ENCODE measurements at regions of chr14 and their contacts with region 1.

Region 1: DNA sequence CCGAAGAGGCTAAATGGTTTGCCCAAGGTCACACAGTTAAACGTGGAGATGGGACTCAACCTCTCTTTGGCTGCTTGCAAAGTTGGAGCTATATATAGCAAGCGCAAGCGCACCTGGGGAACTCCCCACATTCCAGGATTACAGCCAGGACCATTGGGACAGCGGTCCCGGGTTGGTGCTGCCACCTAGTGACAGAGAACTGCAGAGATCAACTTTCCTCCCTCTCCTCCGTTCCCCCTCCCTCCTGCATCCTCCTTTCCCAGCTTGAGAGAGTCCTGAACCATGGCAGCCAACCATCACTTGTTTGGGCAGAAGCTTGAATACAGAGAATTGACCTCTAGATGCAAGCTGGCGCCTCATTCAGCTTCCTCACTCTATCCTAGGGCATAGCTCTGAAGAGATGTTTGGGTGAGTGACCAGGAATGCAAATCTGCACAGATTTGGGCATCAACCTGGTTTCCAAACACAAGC is 17.4 kb upstream of the FLVCR2 start:
- DNase-seq: peak; percentile 71
- ATAC-seq: no peak
- H3K4me3 Mint-ChIP-seq: peak overlapping the region; percentile 13
- H3K27ac Mint-ChIP-seq: peak overlapping the region; percentile 88
- H3K4me1 Mint-ChIP-seq: peaks cover 82% of the 10 kb centered on the region
- H3K27me3 Mint-ChIP-seq: no peaks in the 10 kb centered on the region

Region 2: GRCh38 chr14:75383721-75384120 is 177.3 kb before region 1 on chr14:
- CTCF ChIA-PET with region 1: no interaction called
- POLR2A ChIA-PET with region 1: no interaction called
- intact Hi-C with region 1: no loop called
- DNase-seq: no peak
- ATAC-seq: no peak
- H3K4me3 Mint-ChIP-seq: no peak overlapping the region
- H3K27ac Mint-ChIP-seq: no peak overlapping the region
- H3K4me1 Mint-ChIP-seq: no peaks in the 10 kb centered on the region
- H3K27me3 Mint-ChIP-seq: peaks cover 5% of the 10 kb centered on the region

Region 3: DNA sequence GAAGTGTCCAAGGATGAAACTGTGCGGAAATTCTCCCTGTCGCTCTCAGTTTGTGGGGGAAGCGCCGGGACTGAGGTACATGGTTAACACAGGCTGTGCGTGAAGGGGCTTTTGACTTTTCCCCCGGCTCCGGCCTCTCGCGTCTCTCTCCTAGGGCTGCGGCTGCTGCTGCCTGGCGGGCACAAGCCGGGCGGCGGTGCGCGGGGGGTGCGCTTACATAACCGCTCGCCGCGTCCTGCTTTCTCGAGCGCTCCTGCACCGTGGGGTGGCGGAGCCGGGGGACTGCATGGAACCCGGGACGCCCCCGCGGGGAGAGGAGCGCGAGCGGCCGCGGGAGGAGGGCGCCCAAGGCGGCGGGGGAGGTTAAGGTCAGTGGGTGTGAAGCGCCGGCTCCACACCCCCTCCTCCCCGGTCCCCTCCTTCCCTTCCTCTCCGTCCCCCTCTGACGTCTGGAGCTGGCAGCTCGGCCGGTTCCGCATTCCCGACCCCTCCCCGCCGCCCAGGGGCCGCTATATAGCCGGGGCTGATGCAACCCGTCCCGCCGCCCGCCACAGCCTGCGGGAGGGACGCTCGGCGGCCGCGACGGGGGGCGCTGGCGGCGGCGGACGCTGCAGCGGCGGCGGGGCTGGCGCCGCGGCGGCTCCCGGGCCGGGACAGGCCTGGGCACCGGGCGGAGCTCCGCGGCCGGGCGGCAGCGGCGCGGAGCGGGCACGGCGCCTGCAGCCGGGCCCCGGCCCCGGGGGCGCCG is 133.3 kb before region 1 on chr14 and contains the start of gene JDP2:
- CTCF ChIA-PET with region 1: no interaction called
- POLR2A ChIA-PET with region 1: no interaction called
- intact Hi-C with region 1: loop called (anchors 5 kb)
- DNase-seq: peak; percentile 68
- ATAC-seq: peak; percentile 47
- H3K4me3 Mint-ChIP-seq: peak within 1 kb of the TSS; percentile 66
- H3K27ac Mint-ChIP-seq: peak within 1 kb of the TSS; percentile 62
- H3K4me1 Mint-ChIP-seq: peaks cover 17% of the 10 kb centered on the region
- H3K27me3 Mint-ChIP-seq: peaks cover 14% of the 10 kb centered on the region
- total RNA-seq, gene JDP2: 2.4 to 2.6 TPM

Region 4: GRCh38 chr14:75514673-75515628 is 46.0 kb before region 1 on chr14:
- CTCF ChIA-PET with region 1: interaction called, 18 read pairs
- POLR2A ChIA-PET with region 1: no interaction called
- intact Hi-C with region 1: no loop called
- DNase-seq: peak; percentile 65
- ATAC-seq: peak; percentile 28
- H3K4me3 Mint-ChIP-seq: peak overlapping the region; percentile 72
- H3K27ac Mint-ChIP-seq: peak overlapping the region; percentile 96
- H3K4me1 Mint-ChIP-seq: peaks cover 57% of the 10 kb centered on the region
- H3K27me3 Mint-ChIP-seq: no peaks in the 10 kb centered on the region

Region 5: GRCh38 chr14:75542588-75543091 is 18.4 kb before region 1 on chr14:
- CTCF ChIA-PET with region 1: interaction called, 98 read pairs
- POLR2A ChIA-PET with region 1: interaction called, 22 read pairs
- intact Hi-C with region 1: loop called (anchors 1 kb)
- DNase-seq: peak; percentile 95
- ATAC-seq: peak; percentile 86
- H3K4me3 Mint-ChIP-seq: peak overlapping the region; percentile 59
- H3K27ac Mint-ChIP-seq: peak overlapping the region; percentile 98
- H3K4me1 Mint-ChIP-seq: peaks cover 85% of the 10 kb centered on the region
- H3K27me3 Mint-ChIP-seq: no peaks in the 10 kb centered on the region

Region 6: DNA sequence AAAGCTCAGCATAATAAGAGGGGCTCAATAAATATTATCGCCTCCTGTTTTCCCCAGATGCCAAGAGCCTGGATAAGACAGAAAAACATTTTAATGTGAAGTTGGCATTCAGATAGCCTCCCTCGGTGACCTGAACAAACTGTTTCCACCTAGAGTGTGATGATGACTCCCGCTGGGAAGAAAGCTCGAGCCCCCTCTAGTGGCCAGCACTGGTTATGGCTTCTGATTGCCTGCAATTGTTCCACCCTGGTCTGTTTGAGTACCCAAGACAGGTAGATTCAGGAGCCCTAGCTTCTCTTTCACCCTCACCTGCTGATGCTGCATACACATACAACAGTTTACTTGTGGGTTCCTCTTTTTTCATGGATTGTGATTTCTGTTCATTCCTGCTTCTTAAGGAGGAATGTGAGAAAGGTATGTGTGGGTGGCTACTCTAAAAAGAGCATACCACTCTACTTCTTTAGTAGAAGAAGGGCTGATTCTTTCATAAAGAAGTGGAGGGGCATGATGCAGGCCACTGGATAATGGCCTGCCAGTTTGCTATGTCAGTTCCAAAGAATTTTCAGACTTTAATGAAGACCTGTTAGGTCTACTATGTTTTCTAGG is 93.2 kb after region 1 on chr14:
- CTCF ChIA-PET with region 1: interaction called, 13 read pairs
- POLR2A ChIA-PET with region 1: no interaction called
- intact Hi-C with region 1: no loop called
- DNase-seq: peak; percentile 91
- ATAC-seq: peak; percentile 94
- H3K4me3 Mint-ChIP-seq: no peak overlapping the region
- H3K27ac Mint-ChIP-seq: no peak overlapping the region
- H3K4me1 Mint-ChIP-seq: peaks cover 11% of the 10 kb centered on the region
- H3K27me3 Mint-ChIP-seq: no peaks in the 10 kb centered on the region

Measured in activated CD4-positive, alpha-beta T cell treated with anti-CD3 and anti-CD28 coated beads for 36 hours (primary cell).